Caco-2 (cell line): ENCODE measurements at regions of chr11 and their contacts with region 1.

Region 1: GRCh38 chr11:59053387-59053786 is 32.7 kb upstream of the GLYATL1B start:
- DNase-seq: peak in 1 of 2 experiments; percentile 71
- H3K4me3 ChIP-seq: no peak overlapping the region
- H3K4me3 Mint-ChIP-seq: no peak overlapping the region
- H3K27ac Mint-ChIP-seq: no peak overlapping the region
- H3K4me1 ChIP-seq: no peaks in the 10 kb centered on the region
- H3K4me1 Mint-ChIP-seq: peaks cover 12% of the 10 kb centered on the region
- H3K27me3 ChIP-seq: no peaks in the 10 kb centered on the region
- H3K27me3 Mint-ChIP-seq: no peaks in the 10 kb centered on the region
- CTCF ChIP-seq: peak; percentile 53 to 57

Region 2: GRCh38 chr11:58654079-58654907 is 399.1 kb before region 1 on chr11:
- CTCF ChIA-PET with region 1: interaction called, 8 read pairs
- POLR2A ChIA-PET with region 1: no interaction called
- intact Hi-C with region 1: loop called (anchors 1 kb)
- DNase-seq: peak; percentile 75 to 82
- H3K4me3 ChIP-seq: no peak overlapping the region
- H3K4me3 Mint-ChIP-seq: no peak overlapping the region
- H3K27ac Mint-ChIP-seq: no peak overlapping the region
- H3K4me1 ChIP-seq: peaks cover 13% of the 10 kb centered on the region; the same call in 1 of the 2 replicates
- H3K4me1 Mint-ChIP-seq: peaks cover 23% of the 10 kb centered on the region
- H3K27me3 ChIP-seq: no peaks in the 10 kb centered on the region
- H3K27me3 Mint-ChIP-seq: no peaks in the 10 kb centered on the region
- CTCF ChIP-seq: peak; percentile 88 to 97

Region 3: GRCh38 chr11:58788355-58789023 is 264.9 kb before region 1 on chr11:
- CTCF ChIA-PET with region 1: interaction called, 5 read pairs
- POLR2A ChIA-PET with region 1: no interaction called
- intact Hi-C with region 1: loop called (anchors 1 kb)
- DNase-seq: peak; percentile 69 to 76
- H3K4me3 ChIP-seq: no peak overlapping the region
- H3K4me3 Mint-ChIP-seq: no peak overlapping the region
- H3K27ac Mint-ChIP-seq: no peak overlapping the region
- H3K4me1 ChIP-seq: peaks cover 40% of the 10 kb centered on the region
- H3K4me1 Mint-ChIP-seq: peaks cover 24% of the 10 kb centered on the region
- H3K27me3 ChIP-seq: no peaks in the 10 kb centered on the region
- H3K27me3 Mint-ChIP-seq: no peaks in the 10 kb centered on the region
- CTCF ChIP-seq: peak; percentile 77 to 89

Region 4: GRCh38 chr11:58900479-58901420 is 152.6 kb before region 1 on chr11:
- CTCF ChIA-PET with region 1: interaction called, 30 read pairs
- POLR2A ChIA-PET with region 1: no interaction called
- intact Hi-C with region 1: loop called (anchors 1 kb)
- DNase-seq: peak; percentile 90
- H3K4me3 ChIP-seq: no peak overlapping the region
- H3K4me3 Mint-ChIP-seq: peak overlapping the region; percentile 41
- H3K27ac Mint-ChIP-seq: no peak overlapping the region
- H3K4me1 ChIP-seq: no peaks in the 10 kb centered on the region
- H3K4me1 Mint-ChIP-seq: no peaks in the 10 kb centered on the region
- H3K27me3 ChIP-seq: no peaks in the 10 kb centered on the region
- H3K27me3 Mint-ChIP-seq: no peaks in the 10 kb centered on the region
- CTCF ChIP-seq: peak; percentile 63 to 75

Region 5: GRCh38 chr11:58958500-58958899 is 94.9 kb before region 1 on chr11:
- CTCF ChIA-PET with region 1: interaction called, 3 read pairs
- POLR2A ChIA-PET with region 1: no interaction called
- intact Hi-C with region 1: loop called (anchors 1 kb)
- DNase-seq: peak in 1 of 2 experiments; percentile 48
- H3K4me3 ChIP-seq: no peak overlapping the region
- H3K4me3 Mint-ChIP-seq: no peak overlapping the region
- H3K27ac Mint-ChIP-seq: no peak overlapping the region
- H3K4me1 ChIP-seq: no peaks in the 10 kb centered on the region
- H3K4me1 Mint-ChIP-seq: no peaks in the 10 kb centered on the region
- H3K27me3 ChIP-seq: no peaks in the 10 kb centered on the region
- H3K27me3 Mint-ChIP-seq: peaks cover 3% of the 10 kb centered on the region
- CTCF ChIP-seq: peak; percentile 17 to 36

Region 6: DNA sequence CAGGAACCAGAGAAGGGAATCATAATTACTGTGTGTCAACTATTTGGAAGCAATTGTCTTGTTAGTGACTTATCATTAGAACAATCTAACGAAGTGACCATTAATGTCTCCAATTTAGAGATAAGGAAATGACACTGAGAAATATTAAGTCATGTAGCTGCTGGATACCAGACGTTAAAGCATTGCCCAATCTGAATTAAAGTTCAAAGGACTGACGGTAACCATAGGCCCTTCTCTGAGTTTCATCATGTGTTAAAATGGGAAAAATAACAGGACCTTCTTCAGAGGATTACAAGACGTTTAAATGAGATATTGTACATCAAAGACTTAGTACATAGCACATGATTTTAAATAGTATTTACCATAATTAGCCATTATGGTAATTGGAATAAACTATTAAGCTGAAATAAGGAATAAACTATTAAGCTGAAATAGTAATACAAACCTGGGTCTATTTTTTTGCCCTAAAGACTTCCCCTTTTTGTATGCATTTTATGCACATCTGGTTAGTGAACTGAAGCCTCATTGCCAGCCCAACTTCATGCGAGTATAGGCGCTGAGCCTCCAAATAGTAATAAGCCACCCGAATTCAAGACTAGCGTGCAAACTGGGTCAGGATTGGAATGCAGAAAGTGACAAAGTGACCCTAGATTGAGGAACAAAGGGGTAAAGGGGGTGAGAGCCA is 73.1 kb before region 1 on chr11:
- CTCF ChIA-PET with region 1: no interaction called
- POLR2A ChIA-PET with region 1: no interaction called
- intact Hi-C with region 1: no loop called
- DNase-seq: no peak
- H3K4me3 ChIP-seq: no peak overlapping the region
- H3K4me3 Mint-ChIP-seq: no peak overlapping the region
- H3K27ac Mint-ChIP-seq: no peak overlapping the region
- H3K4me1 ChIP-seq: peaks cover 4% of the 10 kb centered on the region
- H3K4me1 Mint-ChIP-seq: peaks cover 9% of the 10 kb centered on the region
- H3K27me3 ChIP-seq: no peaks in the 10 kb centered on the region
- H3K27me3 Mint-ChIP-seq: no peaks in the 10 kb centered on the region
- CTCF ChIP-seq: no peak

Region 7: GRCh38 chr11:59158206-59159068 is 105.0 kb after region 1 on chr11:
- CTCF ChIA-PET with region 1: interaction called, 29 read pairs
- POLR2A ChIA-PET with region 1: no interaction called
- intact Hi-C with region 1: loop called (anchors 1 kb)
- DNase-seq: peak; percentile 68 to 78
- H3K4me3 ChIP-seq: no peak overlapping the region
- H3K4me3 Mint-ChIP-seq: no peak overlapping the region
- H3K27ac Mint-ChIP-seq: no peak overlapping the region
- H3K4me1 ChIP-seq: peaks cover 16% of the 10 kb centered on the region
- H3K4me1 Mint-ChIP-seq: peaks cover 16% of the 10 kb centered on the region
- H3K27me3 ChIP-seq: no peaks in the 10 kb centered on the region
- H3K27me3 Mint-ChIP-seq: peaks cover 10% of the 10 kb centered on the region
- CTCF ChIP-seq: peak; percentile 80 to 84